ENCODE measurements at regions of chr5 and their contacts with region 1.

Region 1: DNA sequence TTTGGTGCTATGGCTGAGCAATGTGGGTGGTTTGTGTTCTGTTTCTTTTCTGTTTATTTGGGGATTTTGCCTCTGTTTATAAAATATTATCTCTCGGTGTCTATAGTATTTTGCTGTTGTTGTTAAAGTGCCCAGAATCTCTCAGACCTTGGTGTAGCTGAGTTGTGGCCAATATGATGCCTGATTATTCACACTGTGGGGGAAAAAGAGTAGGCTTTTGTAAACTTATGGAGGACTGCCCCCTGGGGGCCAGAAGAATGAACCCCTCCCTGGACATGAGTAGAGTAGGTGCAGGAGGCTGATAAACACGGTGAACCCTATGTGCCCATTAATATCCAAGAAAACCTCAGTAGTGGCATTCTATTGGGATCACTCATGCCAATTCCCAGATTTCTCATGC is 49.0 kb upstream of the DPYSL3 start:
- DNase-seq: no peak
- H3K4me3 ChIP-seq: no peak overlapping the region
- H3K27me3 ChIP-seq: no peaks in the 10 kb centered on the region
- CTCF ChIP-seq: peak; percentile 79

Region 2: GRCh38 chr5:147223948-147224791 is 334.7 kb before region 1 on chr5:
- CTCF ChIA-PET with region 1: interaction called, 34 read pairs
- POLR2A ChIA-PET with region 1: no interaction called
- DNase-seq: peak; percentile 3
- H3K4me3 ChIP-seq: no peak overlapping the region
- H3K27me3 ChIP-seq: no peaks in the 10 kb centered on the region
- CTCF ChIP-seq: peak; percentile 74

Region 3: GRCh38 chr5:147403651-147404640 is 154.9 kb before region 1 on chr5:
- CTCF ChIA-PET with region 1: interaction called, 14 read pairs
- POLR2A ChIA-PET with region 1: no interaction called
- DNase-seq: peak; percentile 93
- H3K4me3 ChIP-seq: no peak overlapping the region; the same call in 1 of the 2 replicates
- H3K27me3 ChIP-seq: no peaks in the 10 kb centered on the region
- CTCF ChIP-seq: no peak

Region 4: GRCh38 chr5:147464211-147464610 is 94.6 kb before region 1 on chr5:
- CTCF ChIA-PET with region 1: interaction called, 61 read pairs
- POLR2A ChIA-PET with region 1: no interaction called
- DNase-seq: no peak
- H3K4me3 ChIP-seq: no peak overlapping the region
- H3K27me3 ChIP-seq: no peaks in the 10 kb centered on the region
- CTCF ChIP-seq: peak; percentile 55

Region 5: GRCh38 chr5:147576646-147577535 is 18.1 kb after region 1 on chr5:
- CTCF ChIA-PET with region 1: interaction called, 39 read pairs
- POLR2A ChIA-PET with region 1: no interaction called
- DNase-seq: no peak
- H3K4me3 ChIP-seq: no peak overlapping the region
- H3K27me3 ChIP-seq: no peaks in the 10 kb centered on the region
- CTCF ChIP-seq: peak; percentile 91